Activated CD4-positive, alpha-beta memory T cell treated with anti-CD3 and anti-CD28 coated beads for 36 hours (primary cell): ENCODE measurements at regions of chr7 and their contacts with region 1.

Region 1: DNA sequence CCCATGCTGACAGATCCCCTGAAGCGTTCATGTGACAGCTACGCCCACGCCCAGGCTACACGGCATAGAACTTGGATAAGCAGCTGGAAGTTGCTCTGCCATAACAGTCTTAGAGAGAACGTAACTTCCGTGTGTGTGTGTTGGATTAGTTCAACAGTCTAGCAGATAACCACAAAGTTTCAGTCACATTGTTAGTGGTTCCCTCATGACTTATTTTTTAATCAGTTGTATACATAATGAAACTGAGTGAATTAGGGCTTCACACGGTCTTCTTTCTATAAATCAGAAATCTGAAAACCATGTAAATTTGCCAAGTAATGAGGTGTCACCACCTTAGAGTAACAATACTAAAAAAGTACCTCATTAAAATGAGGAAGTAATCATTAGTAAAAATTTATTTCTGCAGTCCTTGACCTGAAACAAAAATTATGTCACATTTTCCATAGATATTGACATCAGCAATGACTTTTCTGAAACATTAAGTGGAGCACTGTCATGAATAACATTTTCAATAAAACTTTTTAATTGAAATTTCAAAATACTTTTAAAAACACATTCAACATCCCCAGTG is 21.7 kb upstream of the MACC1 start:
- DNase-seq: peak; percentile 24
- H3K4me3 Mint-ChIP-seq: no peak overlapping the region
- H3K27ac Mint-ChIP-seq: no peak overlapping the region
- H3K4me1 Mint-ChIP-seq: peaks cover 5% of the 10 kb centered on the region
- H3K27me3 Mint-ChIP-seq: peaks cover 7% of the 10 kb centered on the region

Region 2: GRCh38 chr7:20280475-20281351 is 41.9 kb after region 1 on chr7:
- CTCF ChIA-PET with region 1: no interaction called
- POLR2A ChIA-PET with region 1: no interaction called
- intact Hi-C with region 1: loop called (anchors 5 kb)
- DNase-seq: no peak
- H3K4me3 Mint-ChIP-seq: no peak overlapping the region
- H3K27ac Mint-ChIP-seq: no peak overlapping the region
- H3K4me1 Mint-ChIP-seq: no peaks in the 10 kb centered on the region
- H3K27me3 Mint-ChIP-seq: no peaks in the 10 kb centered on the region